ENCODE measurements at regions of chr1 and their contacts with region 1.

Region 1: DNA sequence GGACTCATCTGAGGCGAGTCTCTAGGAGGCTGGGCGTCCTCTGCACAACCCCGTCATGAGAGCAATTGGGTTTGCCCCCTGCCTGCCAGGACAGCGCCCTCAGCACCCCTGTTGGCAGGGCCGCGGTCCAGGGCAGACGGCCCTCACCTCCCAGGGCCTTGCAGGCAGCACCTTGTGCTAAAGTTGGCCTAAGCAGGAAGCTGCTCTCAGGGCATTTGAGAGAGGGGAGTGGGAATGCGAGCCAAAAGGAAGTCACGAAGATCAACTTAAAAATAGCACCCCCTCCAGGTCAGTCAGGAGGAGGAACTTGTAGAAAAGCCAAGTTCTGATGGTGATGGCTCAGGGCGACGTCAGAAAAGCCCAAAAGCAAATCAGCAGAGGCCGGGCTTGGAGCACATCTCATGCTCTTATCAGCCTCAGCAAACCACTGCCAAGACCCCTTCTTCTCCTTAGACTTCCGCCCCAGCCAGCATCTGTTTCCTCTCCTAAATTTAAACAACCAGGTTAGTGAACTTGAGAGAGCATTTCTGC is 12.6 kb upstream of the ADORA3 start:
- DNase-seq: peak; percentile 36 to 85 (median 59)
- H3K4me3 ChIP-seq: peak overlapping the region in 1 of 4 donors; percentile 47
- H3K27ac ChIP-seq: peak overlapping the region in 4 of 5 donors; percentile 34 to 92 (median 68)
- H3K4me1 ChIP-seq: peaks cover 7 to 19% of the 10 kb centered on the region in 2 donors
- H3K27me3 ChIP-seq: no peaks in the 10 kb centered on the region
- CTCF ChIP-seq: peak in 4 of 6 experiments; percentile 15 to 33 (median 26)
- POLR2A ChIP-seq: no peak

Region 2: DNA sequence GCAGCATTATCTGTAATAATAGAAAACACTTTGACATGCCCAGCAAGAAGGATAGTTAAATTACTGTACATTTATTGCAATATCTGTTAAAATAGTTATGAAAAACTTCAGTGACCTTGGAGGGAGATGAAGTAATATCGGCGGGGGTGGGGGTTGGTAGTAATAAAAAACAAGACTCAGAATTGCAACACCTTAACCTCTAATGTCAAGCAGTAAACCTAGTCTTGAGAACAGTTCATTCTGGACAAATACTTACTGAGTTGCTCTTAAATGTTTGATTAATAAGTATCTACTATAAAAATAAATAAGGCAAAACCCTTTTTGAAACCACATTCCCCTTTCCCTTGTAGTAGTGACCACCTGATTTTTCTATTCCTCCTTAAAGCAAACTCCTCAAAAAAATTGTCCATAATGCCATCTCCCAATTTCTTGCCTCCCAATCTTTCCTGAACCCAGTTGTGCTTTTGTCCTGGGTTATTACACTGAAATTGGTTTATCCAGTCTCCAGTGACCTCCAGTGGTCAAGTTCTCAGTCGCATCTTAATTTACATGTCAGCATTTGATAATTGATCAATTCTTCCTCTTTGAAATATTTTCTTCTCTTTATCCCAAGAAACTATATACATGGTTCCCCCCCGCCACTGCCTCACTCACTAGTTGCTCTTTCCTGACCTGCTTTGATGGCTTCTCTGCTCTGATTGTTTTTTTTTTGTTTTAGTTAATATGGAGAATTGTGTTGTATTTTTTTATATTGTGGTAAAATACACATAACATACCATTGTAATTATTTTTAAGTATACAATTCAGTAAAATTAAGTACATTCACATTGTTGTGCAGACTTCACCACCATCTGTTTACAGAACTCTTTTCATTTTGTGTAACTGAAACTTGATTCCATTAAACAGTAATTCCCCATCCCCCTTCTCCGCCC is 140.3 kb after region 1 on chr1:
- intact Hi-C with region 1: loop called in 1 of 2 experiments (anchors 10 kb)
- DNase-seq: peak; percentile 25 to 64 (median 45)
- H3K4me3 ChIP-seq: no peak overlapping the region
- H3K27ac ChIP-seq: peak overlapping the region in 3 of 5 donors; percentile 38 to 42 (median 41)
- H3K4me1 ChIP-seq: peaks cover 21 to 50% of the 10 kb centered on the region in 2 donors
- H3K27me3 ChIP-seq: no peaks in the 10 kb centered on the region
- CTCF ChIP-seq: peak; percentile 41 to 85 (median 72)
- POLR2A ChIP-seq: no peak